B cell (primary cell): ENCODE measurements at regions of chr11 and their contacts with region 1.

Region 1: GRCh38 chr11:47248664-47249377 is at the start of gene ACP2:
- DNase-seq: peak; percentile 94
- ATAC-seq: peak; percentile 94
- H3K4me3 ChIP-seq: peak within 1 kb of the TSS; percentile 65 to 99 (median 90)
- H3K4me3 Mint-ChIP-seq: peak within 1 kb of the TSS; percentile 99
- H3K27ac ChIP-seq: peak within 1 kb of the TSS; percentile 56 to 79
- H3K27ac Mint-ChIP-seq: peak within 1 kb of the TSS; percentile 99
- H3K4me1 ChIP-seq: peaks cover 13 to 22% of the 10 kb centered on the region in 2 donors
- H3K4me1 Mint-ChIP-seq: peaks cover 24% of the 10 kb centered on the region
- H3K27me3 ChIP-seq: no peaks in the 10 kb centered on the region
- H3K27me3 Mint-ChIP-seq: no peaks in the 10 kb centered on the region
- CTCF ChIP-seq: no peak
- total RNA-seq, gene ACP2: 23.5 and 29.5 TPM in 2 replicates

Region 2: GRCh38 chr11:47186076-47186936 is 62.5 kb before region 1 on chr11 and contains the start of gene PACSIN3:
- CTCF ChIA-PET with region 1: no interaction called
- POLR2A ChIA-PET with region 1: interaction called, 15 read pairs
- intact Hi-C with region 1: loop called (anchors 2 kb)
- DNase-seq: peak; percentile 65
- ATAC-seq: peak; percentile 80
- H3K4me3 ChIP-seq: peak within 1 kb of the TSS in 4 of 5 experiments; percentile 31 to 65 (median 54)
- H3K4me3 Mint-ChIP-seq: peak within 1 kb of the TSS; percentile 87
- H3K27ac ChIP-seq: no peak within 1 kb of the TSS
- H3K27ac Mint-ChIP-seq: peak within 1 kb of the TSS; percentile 2
- H3K4me1 ChIP-seq: peaks cover 19 to 24% of the 10 kb centered on the region in 2 donors
- H3K4me1 Mint-ChIP-seq: peaks cover 12% of the 10 kb centered on the region
- H3K27me3 ChIP-seq: peaks cover 0 to 44% (median 15%) of the 10 kb centered on the region in 4 experiments
- H3K27me3 Mint-ChIP-seq: peaks cover 18% of the 10 kb centered on the region
- CTCF ChIP-seq: no peak
- total RNA-seq, gene PACSIN3: 1.3 and 2.1 TPM in 2 replicates

Region 3: DNA sequence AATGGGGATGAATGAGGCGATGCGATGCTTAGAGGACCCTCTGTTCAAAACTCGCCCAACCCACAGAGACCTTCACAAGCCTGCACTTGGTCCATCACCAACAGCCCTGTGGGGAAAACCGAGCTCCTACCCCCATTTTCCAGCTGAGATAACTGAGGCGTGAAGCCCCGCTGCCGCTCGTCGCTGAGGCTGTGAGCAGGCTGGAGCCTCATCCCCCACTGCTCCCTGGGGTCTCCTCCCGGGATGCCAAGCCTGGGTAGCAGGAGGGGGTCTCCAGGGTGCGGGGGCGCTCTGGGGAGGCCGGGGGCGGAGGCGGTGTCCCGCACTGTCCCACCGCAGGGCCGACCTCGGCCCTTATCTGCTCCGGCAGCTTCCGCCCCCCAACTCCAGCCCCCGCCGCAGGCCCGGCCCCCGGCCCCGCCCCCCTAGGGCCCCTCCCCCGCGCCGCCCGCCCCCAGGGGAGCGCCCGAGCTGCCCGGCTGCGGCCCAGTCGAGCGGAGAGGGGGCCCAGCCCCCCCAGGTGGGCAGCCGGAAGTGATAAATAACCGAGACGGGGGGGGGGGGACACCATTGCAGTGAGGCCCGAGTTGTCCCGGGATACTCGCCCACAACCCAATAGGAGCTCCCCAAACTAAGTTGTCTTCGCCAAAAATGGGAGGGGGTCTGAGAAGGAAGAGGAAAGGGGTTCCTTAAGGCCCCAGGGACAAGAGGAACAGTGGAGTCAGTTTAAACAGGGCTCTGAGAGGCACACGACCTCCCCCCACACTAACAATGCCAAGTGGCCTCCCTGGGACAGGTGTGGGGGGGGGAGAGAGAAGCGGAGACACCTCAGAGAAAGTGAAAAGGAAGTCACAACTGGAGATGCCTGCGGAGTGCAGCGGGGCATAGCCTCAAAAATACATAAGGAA is 151.3 kb after region 1 on chr11:
- CTCF ChIA-PET with region 1: interaction called, 3 read pairs
- POLR2A ChIA-PET with region 1: interaction called, 3 read pairs
- intact Hi-C with region 1: loop called (anchors 2 kb)
- DNase-seq: peak; percentile 71
- ATAC-seq: peak; percentile 82
- H3K4me3 ChIP-seq: peak overlapping the region; percentile 71 to 85 (median 81)
- H3K4me3 Mint-ChIP-seq: peak overlapping the region; percentile 91
- H3K27ac ChIP-seq: peak overlapping the region; percentile 85
- H3K27ac Mint-ChIP-seq: peak overlapping the region; percentile 96
- H3K4me1 ChIP-seq: peaks cover 45 to 53% of the 10 kb centered on the region in 2 donors
- H3K4me1 Mint-ChIP-seq: peaks cover 45% of the 10 kb centered on the region
- H3K27me3 ChIP-seq: no peaks in the 10 kb centered on the region
- H3K27me3 Mint-ChIP-seq: no peaks in the 10 kb centered on the region
- CTCF ChIP-seq: no peak